Sigmoid colon (tissue), 7 donors: ENCODE measurements at regions of chr17 and their contacts with region 1.

Region 1: DNA sequence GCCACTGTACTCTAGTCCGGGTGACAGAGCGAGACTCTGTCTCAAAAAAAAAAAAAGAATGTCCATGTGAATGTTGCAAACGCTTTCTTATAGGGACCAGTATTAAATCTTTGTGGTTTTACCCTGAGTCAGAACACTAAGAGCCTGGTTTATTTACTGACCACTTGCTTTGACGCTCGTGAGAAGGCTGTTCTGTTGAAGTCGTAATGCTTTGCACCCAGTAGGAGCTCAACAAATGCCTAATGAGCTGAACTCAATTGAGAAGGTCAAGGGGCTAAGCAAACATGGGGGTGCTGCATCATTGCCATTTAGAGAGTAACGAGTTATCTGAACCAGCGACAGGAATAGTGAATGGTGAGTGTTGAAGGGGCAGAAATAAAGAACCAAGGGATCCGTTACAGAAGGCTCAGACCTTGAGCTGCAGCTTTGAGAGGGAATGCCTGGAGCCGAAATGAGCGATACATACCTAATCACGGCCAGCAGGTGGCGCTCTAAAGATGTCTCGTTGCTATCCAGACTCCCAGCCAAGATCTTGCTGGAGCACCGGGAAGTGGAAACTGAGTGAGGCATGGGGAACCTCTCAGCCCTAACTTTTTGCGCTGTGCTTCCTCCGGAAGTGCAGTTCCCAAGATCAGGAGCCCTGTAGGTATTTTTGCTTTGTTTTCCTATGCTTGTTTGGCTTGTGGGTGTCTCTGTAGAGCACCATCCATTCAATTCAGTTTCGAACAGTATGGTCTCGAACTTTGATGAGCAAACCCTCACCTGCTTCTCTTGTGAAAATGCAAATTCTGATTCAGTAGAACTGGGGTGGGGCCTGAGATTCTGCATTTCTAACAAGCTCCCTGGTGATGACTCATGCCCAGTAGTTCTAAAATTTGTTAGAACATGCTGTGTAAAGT is 12.6 kb upstream of the RNF222 start:
- DNase-seq: peak; percentile 94
- H3K4me3 ChIP-seq: no peak overlapping the region
- H3K27ac ChIP-seq: no peak overlapping the region
- H3K4me1 ChIP-seq: peaks cover 0 to 8% (median 0%) of the 10 kb centered on the region in 4 donors
- H3K27me3 ChIP-seq: peaks cover 0 to 2% (median 0%) of the 10 kb centered on the region in 3 donors
- CTCF ChIP-seq: peak; percentile 73 to 86 (median 78)
- EP300 ChIP-seq: no peak
- POLR2A ChIP-seq: no peak

Region 2: GRCh38 chr17:8466456-8466855 is 56.2 kb after region 1 on chr17:
- intact Hi-C with region 1: no loop called
- DNase-seq: no peak
- H3K4me3 ChIP-seq: no peak overlapping the region
- H3K27ac ChIP-seq: peak overlapping the region in 1 of 4 donors; percentile 10
- H3K4me1 ChIP-seq: peaks cover 0 to 49% (median 36%) of the 10 kb centered on the region in 4 donors
- H3K27me3 ChIP-seq: no peaks in the 10 kb centered on the region
- CTCF ChIP-seq: no peak
- EP300 ChIP-seq: no peak
- POLR2A ChIP-seq: no peak

Region 3: GRCh38 chr17:8581002-8581658 is 170.9 kb after region 1 on chr17:
- intact Hi-C with region 1: no loop called
- DNase-seq: no peak
- H3K4me3 ChIP-seq: no peak overlapping the region
- H3K27ac ChIP-seq: no peak overlapping the region
- H3K4me1 ChIP-seq: no peaks in the 10 kb centered on the region
- H3K27me3 ChIP-seq: no peaks in the 10 kb centered on the region
- CTCF ChIP-seq: no peak
- EP300 ChIP-seq: no peak
- POLR2A ChIP-seq: no peak

Region 4: DNA sequence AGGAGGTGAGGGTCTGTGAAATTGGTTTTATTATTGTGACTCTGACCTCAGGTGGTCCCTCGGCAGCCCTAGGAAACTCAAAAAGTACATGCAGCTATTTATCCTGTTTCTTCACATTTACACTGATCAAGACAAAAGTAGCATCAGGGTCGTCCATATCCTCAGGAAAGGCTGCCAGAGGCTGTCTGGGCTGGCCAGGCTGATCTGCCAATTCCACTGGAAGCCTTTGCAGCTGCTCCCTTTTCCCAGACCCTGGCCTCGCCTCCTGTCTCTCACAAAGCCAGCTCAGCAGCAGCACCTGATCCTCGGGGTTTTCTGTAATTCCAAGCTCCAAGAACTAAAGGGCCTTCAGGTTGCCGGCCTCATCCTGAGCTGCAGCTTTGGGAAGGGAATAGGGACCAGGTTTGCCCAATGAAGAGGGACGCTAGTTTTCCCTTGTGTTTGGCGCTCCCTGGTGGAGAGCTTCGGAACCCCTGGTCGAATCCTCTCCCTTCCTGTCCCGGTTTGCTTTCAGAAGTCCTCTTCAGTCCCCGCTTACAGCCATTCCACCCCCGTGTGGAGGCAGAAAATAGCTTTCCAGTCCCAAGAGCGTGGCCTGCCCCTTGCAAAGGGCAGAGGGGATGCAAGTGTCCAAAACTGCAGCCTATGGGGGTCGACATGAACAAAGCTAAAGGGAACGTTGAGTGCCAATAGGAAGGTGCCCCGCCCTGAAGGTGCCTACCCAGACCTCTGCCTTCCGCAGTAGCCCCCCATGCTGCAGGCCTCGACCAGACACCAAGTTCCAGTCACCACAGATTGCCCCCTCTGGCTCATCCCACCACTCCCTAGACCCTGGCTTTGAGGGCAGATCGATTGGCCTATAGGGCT is 375.6 kb after region 1 on chr17:
- intact Hi-C with region 1: loop called (anchors 2 kb)
- DNase-seq: peak; percentile 78
- H3K4me3 ChIP-seq: no peak overlapping the region
- H3K27ac ChIP-seq: no peak overlapping the region
- H3K4me1 ChIP-seq: no peaks in the 10 kb centered on the region
- H3K27me3 ChIP-seq: no peaks in the 10 kb centered on the region
- CTCF ChIP-seq: peak in 3 of 4 experiments; percentile 47 to 71 (median 50)
- EP300 ChIP-seq: no peak
- POLR2A ChIP-seq: no peak